ENCODE measurements at regions of chr1 and their contacts with region 1.

Region 1: DNA sequence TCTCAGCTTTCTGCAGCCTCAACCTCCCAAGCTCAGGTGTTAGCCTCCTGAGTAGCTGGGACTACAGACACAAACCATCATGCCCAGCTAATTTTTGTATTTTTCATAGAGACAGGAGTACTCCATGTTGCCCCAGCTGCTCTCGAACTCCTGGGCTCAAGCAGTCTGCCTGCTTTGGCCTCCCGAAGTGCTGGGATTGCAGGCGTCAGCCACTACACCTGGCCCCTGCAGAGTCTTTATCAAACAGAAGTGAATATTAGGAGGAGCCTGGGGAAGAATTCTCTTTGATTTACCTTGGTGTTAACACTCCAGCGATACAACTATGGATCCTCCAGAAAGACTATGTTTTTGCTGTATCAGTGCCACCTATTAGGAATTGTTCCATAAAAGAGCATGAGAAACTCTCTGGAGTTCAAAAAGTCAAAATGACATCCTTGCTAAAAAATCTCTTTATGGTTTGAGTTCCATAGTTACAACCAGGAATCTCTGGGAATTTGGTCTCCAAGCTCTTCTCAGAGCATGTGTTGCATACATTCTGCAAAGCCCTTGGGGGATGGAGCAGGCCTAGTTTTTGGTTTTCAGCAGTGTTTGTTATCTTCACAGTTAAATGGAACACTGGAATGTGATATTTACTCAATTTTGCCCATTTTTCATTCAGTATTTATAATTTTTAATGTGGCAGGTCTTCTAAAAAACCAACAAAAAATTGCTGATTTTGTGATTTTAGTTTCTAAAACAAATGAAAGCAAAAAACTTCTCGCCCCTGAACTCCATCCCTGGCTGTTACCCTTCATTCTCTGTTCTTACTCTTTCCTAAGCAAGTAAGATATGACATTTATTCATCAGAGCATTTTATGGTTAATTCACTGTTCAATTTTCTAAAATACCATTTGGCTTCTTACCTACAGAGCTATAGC is 77.3 kb downstream of the OLFML2B start:
- DNase-seq: no peak
- ATAC-seq: no peak
- H3K4me3 ChIP-seq: no peak overlapping the region
- H3K27ac ChIP-seq: no peak overlapping the region
- H3K4me1 ChIP-seq: peaks cover 32 to 34% of the 10 kb centered on the region in 2 donors
- H3K27me3 ChIP-seq: no peaks in the 10 kb centered on the region
- CTCF ChIP-seq: no peak
- POLR2A ChIP-seq: no peak

Region 2: DNA sequence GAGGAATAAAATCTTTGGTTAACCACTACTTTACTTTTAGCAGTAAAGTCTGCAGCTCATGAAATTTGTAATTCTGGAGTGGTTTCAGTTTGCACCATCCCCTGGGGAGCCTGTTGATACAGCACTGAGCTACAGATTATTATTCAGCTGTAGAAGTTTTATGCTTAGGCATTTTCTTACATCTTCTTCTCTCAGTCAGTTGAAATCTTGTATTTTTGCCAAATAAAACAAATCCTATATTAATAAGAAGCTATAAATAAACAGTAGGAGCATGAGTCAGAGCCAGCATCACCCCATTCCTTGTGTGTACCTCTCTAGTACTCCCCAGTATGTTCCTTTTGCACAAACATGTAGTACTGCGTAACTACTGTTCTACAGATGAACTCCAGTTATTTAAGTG is 61.3 kb before region 1 on chr1:
- in situ Hi-C with region 1: no loop called
- intact Hi-C with region 1: loop called (anchors 10 kb)
- DNase-seq: no peak
- ATAC-seq: no peak
- H3K4me3 ChIP-seq: peak overlapping the region in 1 of 4 donors; percentile 1
- H3K27ac ChIP-seq: no peak overlapping the region
- H3K4me1 ChIP-seq: peaks cover 17 to 24% of the 10 kb centered on the region in 2 donors
- H3K27me3 ChIP-seq: no peaks in the 10 kb centered on the region
- CTCF ChIP-seq: no peak
- POLR2A ChIP-seq: no peak

Region 3: GRCh38 chr1:161994175-161994668 is 47.9 kb after region 1 on chr1:
- in situ Hi-C with region 1: no loop called
- intact Hi-C with region 1: no loop called
- DNase-seq: no peak
- ATAC-seq: no peak
- H3K4me3 ChIP-seq: peak overlapping the region in 1 of 4 donors; percentile 13
- H3K27ac ChIP-seq: no peak overlapping the region
- H3K4me1 ChIP-seq: no peaks in the 10 kb centered on the region
- H3K27me3 ChIP-seq: no peaks in the 10 kb centered on the region
- CTCF ChIP-seq: no peak
- POLR2A ChIP-seq: no peak

Region 4: DNA sequence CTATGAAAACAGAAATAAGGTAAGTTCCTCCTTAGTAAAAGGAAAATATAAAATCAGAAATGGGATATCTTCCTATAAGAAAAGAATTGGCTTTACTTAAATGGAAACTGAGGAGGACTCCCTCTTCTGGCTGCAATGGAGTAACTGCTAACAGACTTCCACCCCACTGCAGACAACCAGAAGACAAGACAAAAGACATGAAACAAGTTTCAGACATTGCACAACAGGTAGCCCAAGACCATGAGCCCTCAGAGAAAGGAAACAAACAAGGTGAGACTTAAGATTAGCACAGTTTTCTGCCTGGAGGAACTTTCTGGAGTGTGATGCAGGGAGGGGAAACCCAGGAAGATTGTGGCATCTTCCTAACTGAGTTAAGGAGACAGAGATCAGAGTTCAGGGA is 94.4 kb after region 1 on chr1:
- in situ Hi-C with region 1: no loop called
- intact Hi-C with region 1: no loop called
- DNase-seq: no peak
- ATAC-seq: no peak
- H3K4me3 ChIP-seq: no peak overlapping the region
- H3K27ac ChIP-seq: no peak overlapping the region
- H3K4me1 ChIP-seq: no peaks in the 10 kb centered on the region
- H3K27me3 ChIP-seq: no peaks in the 10 kb centered on the region
- CTCF ChIP-seq: no peak
- POLR2A ChIP-seq: no peak